Sciatic nerve (tissue), 2 donors: ENCODE measurements at regions of chr11 and their contacts with region 1.

Region 1: GRCh38 chr11:17405232-17406005 is 17.0 kb upstream of the KCNJ11 start:
- DNase-seq: no peak
- ATAC-seq: peak; percentile 69

Region 2: DNA sequence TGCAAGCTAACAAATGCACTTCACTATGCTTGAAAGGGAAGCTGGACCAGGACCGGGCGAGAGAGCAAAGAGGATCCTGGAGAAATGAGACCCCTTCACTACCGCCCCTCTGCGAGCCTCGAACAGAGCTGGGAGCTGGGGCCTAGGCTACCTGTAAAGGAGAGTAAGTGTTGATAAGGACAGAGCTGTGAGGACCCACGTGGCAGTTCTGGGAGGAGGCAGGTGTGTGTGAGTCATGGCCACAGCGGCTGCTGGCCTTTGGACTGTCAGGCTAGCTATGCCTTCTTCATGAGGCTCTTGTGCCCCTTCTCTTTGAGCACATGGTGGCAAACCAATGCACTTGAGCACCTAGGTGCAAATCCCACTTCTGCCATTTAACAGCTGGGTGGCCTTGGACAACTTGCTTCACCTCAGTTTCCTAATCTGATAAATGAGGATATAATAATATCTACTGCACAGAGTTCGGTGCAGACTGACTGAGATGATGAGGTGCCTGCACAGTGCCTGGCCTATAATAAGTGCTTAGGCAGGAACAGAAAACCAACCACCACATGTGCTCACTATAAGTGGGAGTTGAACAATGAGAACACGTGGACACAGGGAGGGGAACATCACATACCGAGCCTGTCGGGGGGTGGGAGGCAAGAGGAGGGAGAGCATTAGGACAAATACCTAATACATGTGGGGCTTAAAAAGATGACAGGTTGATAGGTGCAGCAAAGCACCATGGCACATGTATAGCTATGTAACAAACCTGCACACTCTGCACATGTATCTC is 18.3 kb after region 1 on chr11:
- intact Hi-C with region 1: no loop called
- DNase-seq: no peak
- ATAC-seq: no peak

Region 3: DNA sequence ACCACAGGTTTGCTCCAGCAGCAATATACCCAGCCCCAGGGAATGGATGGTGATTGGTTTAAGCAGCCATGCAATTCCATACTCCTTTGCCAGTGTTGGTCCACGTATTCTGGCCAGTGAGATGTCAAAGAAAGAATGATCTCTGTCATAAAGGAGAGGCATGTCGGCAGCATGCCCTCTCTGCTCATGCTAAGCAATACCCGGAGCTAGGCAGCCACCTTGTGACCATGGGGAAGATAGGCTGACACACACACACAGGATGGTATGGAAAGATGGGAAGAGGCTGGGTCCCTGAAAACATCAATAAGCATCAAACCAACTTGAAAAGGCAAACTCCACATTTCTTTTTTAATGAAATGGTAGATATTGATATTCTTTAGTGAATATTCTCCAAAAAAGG is 66.1 kb after region 1 on chr11:
- intact Hi-C with region 1: loop called (anchors 2 kb)
- DNase-seq: no peak
- ATAC-seq: no peak